Activated B cell treated with CpG ODN at 0.5 μM for 24 hours (primary cell): ENCODE measurements at regions of chr10 and their contacts with region 1.

Region 1: DNA sequence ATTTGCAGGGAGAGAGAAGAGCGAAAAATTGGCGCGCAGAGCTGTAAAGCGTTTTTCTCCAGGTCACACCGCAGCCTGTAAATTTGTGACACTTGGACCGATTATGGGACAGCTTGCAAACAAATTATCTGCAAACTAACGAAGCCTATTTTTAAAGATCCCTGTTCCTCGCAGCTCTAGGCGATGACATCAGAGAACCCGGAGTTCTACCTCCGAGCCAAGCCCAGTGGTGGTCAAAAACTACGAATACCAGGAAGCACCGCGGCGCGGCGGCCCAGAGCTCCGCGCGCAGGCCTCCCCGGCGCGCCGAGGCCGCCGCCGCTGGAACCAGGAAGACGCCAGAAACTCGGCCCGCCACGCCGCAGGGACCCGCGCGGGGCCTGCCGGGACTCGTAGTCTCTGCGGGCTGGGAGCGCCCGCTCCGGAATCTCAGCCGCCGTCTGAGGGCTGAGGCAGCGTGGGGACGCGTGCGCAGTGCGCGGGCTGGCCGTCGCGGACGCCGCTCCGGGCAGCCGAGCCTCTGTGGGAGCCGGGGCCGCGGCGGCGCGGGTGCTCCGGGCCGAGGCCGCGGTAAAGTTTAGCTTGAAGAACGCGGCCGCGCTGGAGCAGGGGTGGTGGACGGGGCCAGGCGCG is at the start of gene PLEKHA1:
- DNase-seq: peak; percentile 90
- ATAC-seq: peak; percentile 89
- H3K4me3 Mint-ChIP-seq: peak within 1 kb of the TSS; percentile 93
- H3K27ac Mint-ChIP-seq: peak within 1 kb of the TSS; percentile 95
- H3K4me1 Mint-ChIP-seq: peaks cover 30% of the 10 kb centered on the region
- H3K27me3 Mint-ChIP-seq: peaks cover 23% of the 10 kb centered on the region
- CTCF ChIP-seq: no peak
- total RNA-seq, gene PLEKHA1: 11.8 and 12.8 TPM in 2 replicates

Region 2: DNA sequence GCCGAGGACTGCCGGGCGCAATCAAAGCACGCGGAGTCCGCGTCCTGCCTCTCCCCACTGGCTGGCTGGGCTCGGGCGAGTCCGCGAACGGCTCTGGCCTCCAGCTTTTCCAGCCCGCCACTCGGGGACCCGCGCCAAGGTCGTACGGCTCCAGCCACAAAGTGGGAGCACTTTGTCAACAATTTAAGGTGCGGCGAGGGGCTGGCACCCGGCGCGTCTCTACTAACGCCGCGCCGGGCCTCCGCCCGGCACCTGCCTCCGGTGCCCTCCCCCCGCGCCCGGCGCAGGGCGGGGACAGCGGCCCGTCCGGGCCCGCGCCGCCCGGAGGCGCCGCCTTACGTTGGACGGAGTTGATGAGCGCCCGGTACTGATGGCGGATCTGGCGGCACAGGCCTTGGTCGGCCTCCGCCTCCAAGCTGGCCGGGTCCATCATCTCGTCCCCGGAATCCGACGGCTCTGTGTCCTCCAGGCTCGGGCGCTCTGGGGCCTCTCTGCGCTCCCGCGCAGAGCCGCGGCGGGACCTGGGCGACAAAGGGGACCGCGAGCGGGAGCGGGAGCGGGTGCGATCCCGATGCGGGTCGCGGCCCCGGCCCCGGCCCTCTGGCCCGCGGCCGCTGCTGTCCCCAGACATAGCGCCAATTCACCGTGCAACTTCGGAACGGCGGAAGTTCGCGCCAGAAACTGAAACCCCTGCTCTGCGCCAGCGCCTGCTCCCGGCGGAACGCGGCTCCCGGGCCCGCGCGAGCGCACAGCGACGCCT is 399.6 kb before region 1 on chr10 and contains the start of gene NSMCE4A:
- CTCF ChIA-PET with region 1: no interaction called
- POLR2A ChIA-PET with region 1: no interaction called
- intact Hi-C with region 1: loop called (anchors 2 kb)
- DNase-seq: peak; percentile 71
- ATAC-seq: peak; percentile 83
- H3K4me3 Mint-ChIP-seq: peak within 1 kb of the TSS; percentile 83
- H3K27ac Mint-ChIP-seq: peak within 1 kb of the TSS; percentile 18
- H3K4me1 Mint-ChIP-seq: peaks cover 26% of the 10 kb centered on the region
- H3K27me3 Mint-ChIP-seq: no peaks in the 10 kb centered on the region
- CTCF ChIP-seq: no peak
- total RNA-seq, gene NSMCE4A: 70.3 and 78.0 TPM in 2 replicates

Region 3: DNA sequence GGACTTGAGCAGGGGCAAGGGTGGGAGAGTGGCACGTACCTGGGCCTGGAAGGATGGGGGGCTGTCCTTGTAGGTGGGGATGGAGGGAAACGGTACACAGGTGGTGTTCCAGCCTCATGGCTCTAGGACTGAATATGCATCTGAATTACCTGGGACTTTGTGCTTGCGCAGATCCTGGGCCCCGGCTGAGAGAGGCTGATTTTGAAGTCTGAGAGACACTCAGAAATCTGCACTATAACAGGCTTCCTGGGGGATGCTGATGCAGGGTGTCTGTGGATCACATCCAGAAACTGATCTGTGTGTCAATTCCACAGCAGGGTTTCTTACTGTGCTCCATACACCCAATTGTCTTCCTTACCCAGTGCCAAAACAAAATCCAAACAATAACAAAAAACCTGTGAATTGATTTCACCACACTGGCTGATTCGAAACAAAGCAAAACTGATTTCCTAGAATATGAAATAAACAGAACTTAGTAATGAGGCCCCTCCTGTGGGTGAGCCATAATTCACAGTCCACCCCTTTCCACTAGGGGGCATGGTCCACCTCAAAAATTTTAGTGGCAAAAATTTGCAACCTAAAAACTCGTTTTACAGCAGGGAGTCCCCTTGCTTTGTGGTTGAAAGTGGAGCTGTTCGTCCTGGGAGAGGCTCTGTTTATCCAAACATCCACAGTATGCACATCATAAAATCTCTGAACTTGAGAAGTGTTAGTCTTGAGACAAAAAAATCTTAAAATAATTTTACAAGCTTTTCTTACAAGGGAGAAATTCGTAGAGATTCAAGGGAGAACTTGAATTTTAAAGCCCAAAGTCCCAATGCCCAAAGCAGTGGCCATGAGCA is 31.8 kb before region 1 on chr10:
- CTCF ChIA-PET with region 1: interaction called, 5 read pairs
- POLR2A ChIA-PET with region 1: interaction called, 3 read pairs
- intact Hi-C with region 1: loop called (anchors 1 kb)
- DNase-seq: no peak
- ATAC-seq: peak; percentile 65
- H3K4me3 Mint-ChIP-seq: no peak overlapping the region
- H3K27ac Mint-ChIP-seq: no peak overlapping the region
- H3K4me1 Mint-ChIP-seq: peaks cover 16% of the 10 kb centered on the region
- H3K27me3 Mint-ChIP-seq: peaks cover 13% of the 10 kb centered on the region
- CTCF ChIP-seq: no peak

Region 4: DNA sequence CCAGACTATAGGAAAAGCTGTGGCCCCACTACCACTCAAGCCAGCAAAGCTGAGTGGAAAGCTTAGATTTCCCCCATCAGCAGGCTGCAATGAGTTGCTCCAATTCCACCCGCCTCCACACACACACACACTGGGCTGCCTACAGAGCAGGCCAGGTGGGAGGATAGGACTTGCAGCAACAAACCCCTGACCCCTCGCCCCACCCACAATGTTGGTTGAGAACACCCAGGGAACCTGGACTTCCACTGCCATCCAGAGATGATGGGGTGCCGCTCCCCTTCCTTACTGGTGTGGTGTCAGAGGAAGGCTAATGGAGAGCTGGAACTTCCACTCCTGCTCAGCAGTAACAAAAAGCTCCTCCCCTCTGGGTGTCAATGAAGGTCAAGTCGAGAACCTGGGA is 16.7 kb before region 1 on chr10:
- CTCF ChIA-PET with region 1: no interaction called
- POLR2A ChIA-PET with region 1: no interaction called
- intact Hi-C with region 1: no loop called
- DNase-seq: no peak
- ATAC-seq: no peak
- H3K4me3 Mint-ChIP-seq: no peak overlapping the region
- H3K27ac Mint-ChIP-seq: no peak overlapping the region
- H3K4me1 Mint-ChIP-seq: no peaks in the 10 kb centered on the region
- H3K27me3 Mint-ChIP-seq: peaks cover 30% of the 10 kb centered on the region
- CTCF ChIP-seq: no peak

Region 5: GRCh38 chr10:122426829-122427228 is 52.5 kb after region 1 on chr10:
- CTCF ChIA-PET with region 1: no interaction called
- POLR2A ChIA-PET with region 1: interaction called, 3 read pairs
- intact Hi-C with region 1: loop called (anchors 2 kb)
- DNase-seq: no peak
- ATAC-seq: no peak
- H3K4me3 Mint-ChIP-seq: peak overlapping the region; percentile 17
- H3K27ac Mint-ChIP-seq: peak overlapping the region; percentile 46
- H3K4me1 Mint-ChIP-seq: peaks cover 55% of the 10 kb centered on the region
- H3K27me3 Mint-ChIP-seq: no peaks in the 10 kb centered on the region
- CTCF ChIP-seq: no peak

Region 6: DNA sequence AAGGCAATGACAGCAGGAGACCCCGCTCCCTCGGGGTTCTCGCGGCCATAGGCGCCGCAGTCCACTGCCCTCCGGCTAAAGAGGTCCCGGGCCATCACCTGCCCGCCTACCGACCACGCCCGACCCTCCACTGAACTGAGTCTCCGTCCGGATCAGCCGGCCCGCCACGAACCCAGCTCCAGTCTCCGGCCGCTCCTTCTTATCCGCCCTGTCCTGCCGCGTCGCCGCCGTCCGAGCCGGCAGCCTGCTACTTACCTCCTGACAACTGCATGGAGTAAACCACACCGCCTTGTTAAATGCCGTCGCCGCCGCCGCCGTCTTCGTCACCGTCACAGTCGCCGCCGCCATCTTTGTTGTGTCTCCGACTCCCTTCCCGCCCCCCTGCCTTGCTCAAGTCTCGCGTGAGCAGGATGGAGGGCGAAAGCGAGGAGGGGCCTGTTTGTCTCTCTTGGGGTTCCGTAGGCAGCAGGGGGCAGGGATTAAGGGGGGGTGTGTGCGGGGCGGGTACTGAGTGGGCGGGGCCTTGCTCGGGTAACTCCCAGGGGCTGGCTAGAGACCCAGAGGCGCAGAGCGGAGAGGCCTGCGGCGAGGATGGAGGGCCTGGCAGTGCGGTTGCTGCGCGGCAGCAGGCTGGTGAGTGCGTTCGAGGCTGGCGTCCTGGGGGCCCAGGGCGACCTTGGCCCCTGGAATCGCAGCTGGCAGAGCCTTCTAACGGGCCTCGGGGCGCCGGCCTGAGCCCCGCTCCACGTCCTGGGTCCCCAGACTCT is 634.3 kb after region 1 on chr10 and contains the starts of genes ACADSB and IKZF5:
- CTCF ChIA-PET with region 1: no interaction called
- POLR2A ChIA-PET with region 1: no interaction called
- intact Hi-C with region 1: loop called (anchors 1 kb)
- DNase-seq: peak; percentile 83
- ATAC-seq: peak; percentile 94
- H3K4me3 Mint-ChIP-seq: peak within 1 kb of the TSS; percentile 96
- H3K27ac Mint-ChIP-seq: peak within 1 kb of the TSS; percentile 96
- H3K4me1 Mint-ChIP-seq: peaks cover 50% of the 10 kb centered on the region
- H3K27me3 Mint-ChIP-seq: no peaks in the 10 kb centered on the region
- CTCF ChIP-seq: no peak
- total RNA-seq, gene ACADSB: 22.7 and 22.8 TPM in 2 replicates
- total RNA-seq, gene IKZF5: 14.2 and 17.0 TPM in 2 replicates